Calu3 (cell line): ENCODE measurements at regions of chr6 and their contacts with region 1.

Region 1: GRCh38 chr6:21022343-21023107 is 488.3 kb downstream of the CDKAL1 start:
- DNase-seq: peak; percentile 91
- H3K4me3 Mint-ChIP-seq: peak overlapping the region; percentile 53
- H3K27ac Mint-ChIP-seq: peak overlapping the region; percentile 97
- H3K4me1 Mint-ChIP-seq: peaks cover 65% of the 10 kb centered on the region
- H3K27me3 Mint-ChIP-seq: no peaks in the 10 kb centered on the region
- CTCF ChIP-seq: no peak

Region 2: GRCh38 chr6:20564269-20564668 is 458.3 kb before region 1 on chr6:
- CTCF ChIA-PET with region 1: no interaction called
- intact Hi-C with region 1: loop called (anchors 5 kb)
- DNase-seq: no peak
- H3K4me3 Mint-ChIP-seq: no peak overlapping the region
- H3K27ac Mint-ChIP-seq: no peak overlapping the region
- H3K4me1 Mint-ChIP-seq: peaks cover 9% of the 10 kb centered on the region
- H3K27me3 Mint-ChIP-seq: no peaks in the 10 kb centered on the region
- CTCF ChIP-seq: peak; percentile 69

Region 3: DNA sequence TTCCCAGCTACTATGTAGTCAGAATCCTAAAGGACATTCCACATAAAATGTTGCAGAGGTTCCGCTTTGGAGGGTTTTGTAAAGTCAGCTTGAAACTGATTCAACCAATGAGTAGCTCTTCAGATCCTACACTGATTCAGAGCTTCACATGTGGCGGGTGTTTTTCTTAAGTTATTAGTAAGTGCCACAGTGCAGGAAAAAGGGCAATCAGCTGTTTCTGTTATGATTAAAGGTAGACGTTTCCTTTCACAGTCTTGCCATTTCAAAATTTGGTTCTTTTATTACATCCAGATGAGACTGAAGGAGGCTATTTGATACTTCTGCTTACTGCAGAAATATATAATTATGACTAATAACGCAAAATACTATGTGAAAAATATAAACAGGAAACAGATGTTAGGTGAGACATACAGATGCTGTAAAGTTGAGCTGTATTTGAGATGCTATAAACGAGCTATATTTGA is 44.3 kb before region 1 on chr6:
- CTCF ChIA-PET with region 1: no interaction called
- intact Hi-C with region 1: no loop called
- DNase-seq: no peak
- H3K4me3 Mint-ChIP-seq: no peak overlapping the region
- H3K27ac Mint-ChIP-seq: no peak overlapping the region
- H3K4me1 Mint-ChIP-seq: no peaks in the 10 kb centered on the region
- H3K27me3 Mint-ChIP-seq: no peaks in the 10 kb centered on the region
- CTCF ChIP-seq: no peak

Region 4: GRCh38 chr6:21109391-21110178 is 87.1 kb after region 1 on chr6:
- CTCF ChIA-PET with region 1: interaction called, 3 read pairs
- intact Hi-C with region 1: loop called (anchors 2 kb)
- DNase-seq: no peak
- H3K4me3 Mint-ChIP-seq: peak overlapping the region; percentile 7
- H3K27ac Mint-ChIP-seq: peak overlapping the region; percentile 77
- H3K4me1 Mint-ChIP-seq: peaks cover 38% of the 10 kb centered on the region
- H3K27me3 Mint-ChIP-seq: no peaks in the 10 kb centered on the region
- CTCF ChIP-seq: no peak

Region 5: GRCh38 chr6:21220271-21220987 is 197.9 kb after region 1 on chr6:
- CTCF ChIA-PET with region 1: interaction called, 6 read pairs
- intact Hi-C with region 1: loop called (anchors 1 kb)
- DNase-seq: peak; percentile 61
- H3K4me3 Mint-ChIP-seq: peak overlapping the region; percentile 15
- H3K27ac Mint-ChIP-seq: peak overlapping the region; percentile 53
- H3K4me1 Mint-ChIP-seq: peaks cover 24% of the 10 kb centered on the region
- H3K27me3 Mint-ChIP-seq: no peaks in the 10 kb centered on the region
- CTCF ChIP-seq: no peak

Region 6: DNA sequence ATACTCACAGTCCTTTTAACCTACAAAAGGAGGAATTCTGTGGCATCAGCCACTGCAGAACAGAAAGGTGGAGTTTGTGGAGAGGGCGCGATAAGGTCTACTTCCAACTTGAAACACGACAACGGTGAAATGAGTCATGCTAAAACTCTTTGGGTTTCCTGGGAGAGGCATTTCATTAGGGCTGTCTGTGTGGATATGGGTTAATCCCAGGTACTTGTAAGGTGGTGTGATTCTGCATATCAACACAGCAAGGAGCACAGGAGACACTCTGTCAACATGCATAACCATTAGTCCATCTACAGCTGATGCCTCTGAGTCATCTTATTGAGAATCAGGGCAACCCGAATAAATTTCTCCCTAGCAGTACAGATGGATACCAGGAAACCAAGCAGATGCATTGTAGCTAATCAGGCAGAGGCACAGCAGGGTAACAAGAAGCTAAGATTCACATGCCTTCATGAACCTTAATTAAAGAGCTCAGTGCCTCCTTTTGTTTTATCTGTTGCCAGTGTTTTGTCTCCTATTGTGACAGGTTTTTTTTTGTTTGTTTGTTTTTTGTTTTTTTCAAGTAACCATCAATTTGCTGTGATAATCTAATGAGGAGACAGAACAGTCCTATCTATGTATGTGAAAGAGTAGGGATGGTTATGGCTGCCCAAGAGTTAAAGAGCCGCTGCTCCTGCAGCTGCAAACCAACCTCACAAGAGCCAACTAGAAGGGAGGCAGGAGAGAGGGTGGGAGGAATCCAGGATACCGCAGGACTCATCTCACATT is 255.3 kb after region 1 on chr6:
- CTCF ChIA-PET with region 1: no interaction called
- intact Hi-C with region 1: loop called (anchors 5 kb)
- DNase-seq: peak; percentile 53
- H3K4me3 Mint-ChIP-seq: no peak overlapping the region
- H3K27ac Mint-ChIP-seq: no peak overlapping the region
- H3K4me1 Mint-ChIP-seq: peaks cover 35% of the 10 kb centered on the region
- H3K27me3 Mint-ChIP-seq: no peaks in the 10 kb centered on the region
- CTCF ChIP-seq: no peak

Region 7: DNA sequence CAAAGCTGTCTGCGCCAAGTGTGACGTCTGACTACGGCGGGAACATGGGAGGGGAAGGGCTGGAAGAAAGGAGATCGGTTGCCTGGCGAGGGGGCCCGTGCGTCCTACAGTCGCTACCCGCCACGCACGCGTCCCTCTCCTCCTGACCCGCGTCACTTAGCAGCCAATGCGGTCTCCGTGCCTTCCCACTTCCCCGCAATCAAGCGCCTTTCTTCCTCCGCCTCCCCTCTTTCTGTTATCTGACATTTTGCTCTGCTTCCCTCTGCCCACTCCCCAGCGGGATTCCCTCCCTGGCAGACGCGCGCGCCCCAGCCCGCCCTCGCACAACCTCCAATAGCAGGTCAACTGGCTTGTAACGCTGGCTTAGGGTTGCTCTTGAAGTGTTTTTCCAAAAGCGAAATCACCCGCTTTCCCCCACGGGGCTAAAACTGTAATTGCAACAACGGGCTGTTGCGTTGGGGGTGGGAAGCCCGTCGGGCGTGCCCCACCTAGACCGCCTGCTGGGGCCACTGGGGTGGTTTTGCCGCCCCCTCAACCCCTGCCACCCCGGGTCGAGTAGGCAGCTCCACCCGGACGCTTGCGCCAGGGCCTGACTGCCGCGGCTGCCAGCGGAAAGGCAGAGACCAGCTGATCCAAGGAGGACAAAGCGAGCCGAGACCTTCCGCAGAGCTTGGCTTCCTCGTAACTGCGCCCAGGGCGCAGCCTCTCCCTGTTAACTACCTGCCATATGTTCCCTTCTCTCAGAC is 564.8 kb after region 1 on chr6:
- CTCF ChIA-PET with region 1: interaction called, 22 read pairs
- intact Hi-C with region 1: loop called (anchors 1 kb)
- DNase-seq: peak; percentile 79
- H3K4me3 Mint-ChIP-seq: peak overlapping the region; percentile 93
- H3K27ac Mint-ChIP-seq: peak overlapping the region; percentile 89
- H3K4me1 Mint-ChIP-seq: no peaks in the 10 kb centered on the region
- H3K27me3 Mint-ChIP-seq: no peaks in the 10 kb centered on the region
- CTCF ChIP-seq: peak; percentile 69